ENCODE measurements at regions of chr9 and their contacts with region 1.

Region 1: GRCh38 chr9:83554278-83554677 is 16.1 kb upstream of the FRMD3 start:
- DNase-seq: no peak
- H3K4me3 Mint-ChIP-seq: no peak overlapping the region
- H3K27ac Mint-ChIP-seq: no peak overlapping the region
- H3K4me1 Mint-ChIP-seq: no peaks in the 10 kb centered on the region
- H3K27me3 Mint-ChIP-seq: no peaks in the 10 kb centered on the region

Region 2: GRCh38 chr9:83339435-83339834 is 214.8 kb before region 1 on chr9:
- CTCF ChIA-PET with region 1: no interaction called
- DNase-seq: no peak
- H3K4me3 Mint-ChIP-seq: no peak overlapping the region
- H3K27ac Mint-ChIP-seq: no peak overlapping the region
- H3K4me1 Mint-ChIP-seq: peaks cover 4% of the 10 kb centered on the region
- H3K27me3 Mint-ChIP-seq: no peaks in the 10 kb centered on the region

Region 3: DNA sequence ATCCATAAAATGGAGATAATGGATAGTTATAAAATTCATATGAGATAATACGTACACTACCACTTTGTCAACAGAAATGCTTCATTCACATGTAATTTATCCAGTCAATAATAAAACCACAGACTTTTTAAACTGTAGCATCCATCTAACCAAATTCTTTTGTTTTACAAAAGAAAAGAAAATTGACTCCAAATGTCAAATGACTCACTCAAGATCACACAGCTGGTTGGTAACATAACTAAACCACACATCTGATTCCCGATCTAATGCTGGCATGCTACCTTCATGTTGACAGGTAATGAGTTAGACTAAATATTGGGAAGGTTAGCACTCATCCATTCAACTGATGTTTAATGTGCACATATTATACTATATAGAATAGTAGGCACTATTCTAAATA is 21.0 kb before region 1 on chr9:
- CTCF ChIA-PET with region 1: no interaction called
- DNase-seq: no peak
- H3K4me3 Mint-ChIP-seq: no peak overlapping the region
- H3K27ac Mint-ChIP-seq: no peak overlapping the region
- H3K4me1 Mint-ChIP-seq: no peaks in the 10 kb centered on the region
- H3K27me3 Mint-ChIP-seq: peaks cover 23% of the 10 kb centered on the region

Region 4: DNA sequence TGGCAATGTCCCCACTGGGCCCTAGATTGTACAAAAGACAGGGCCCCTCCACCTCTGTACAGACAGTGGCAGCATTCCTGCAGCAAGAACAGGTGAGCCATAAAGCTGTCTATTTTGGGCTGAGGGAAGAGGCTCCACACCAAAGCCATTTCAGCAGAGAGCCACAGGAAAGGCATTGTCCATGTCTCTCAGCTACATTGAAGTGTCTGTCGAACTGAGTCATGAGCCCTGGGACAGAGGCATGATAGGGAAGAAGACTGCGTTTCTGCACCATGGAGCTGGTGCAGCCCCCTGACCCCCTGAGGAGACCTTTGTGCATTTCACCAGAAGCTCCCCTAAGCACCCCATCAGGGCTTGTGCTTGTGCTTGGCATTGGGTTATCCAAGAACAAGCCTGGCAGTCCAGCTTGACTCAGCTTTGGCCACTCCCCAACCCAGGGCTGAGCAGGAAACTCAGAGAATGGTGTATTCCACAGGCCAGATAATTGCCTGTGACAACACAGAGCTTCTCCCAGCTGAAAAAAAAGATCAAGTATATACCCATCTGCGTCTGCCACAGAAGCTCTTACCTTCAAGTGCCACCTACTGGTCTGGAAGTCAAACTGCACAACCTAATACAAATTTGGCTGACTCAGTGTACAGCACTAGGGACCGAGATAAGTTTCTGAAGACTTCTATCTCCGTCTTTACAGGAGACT is 10.1 kb before region 1 on chr9:
- CTCF ChIA-PET with region 1: interaction called, 10 read pairs
- DNase-seq: no peak
- H3K4me3 Mint-ChIP-seq: no peak overlapping the region
- H3K27ac Mint-ChIP-seq: no peak overlapping the region
- H3K4me1 Mint-ChIP-seq: no peaks in the 10 kb centered on the region
- H3K27me3 Mint-ChIP-seq: peaks cover 13% of the 10 kb centered on the region

Measured in activated naive CD4-positive, alpha-beta T cell treated with anti-CD3 and anti-CD28 coated beads, Interleukin-2, amount 10 ng/mL, durations not matched to agents 7 days and 5 days (primary cell).